Mucosa of descending colon (tissue), 3 donors: ENCODE measurements at regions of chr19 and their contacts with region 1.

Region 1: GRCh38 chr19:56085571-56086275 is 35.4 kb downstream of the ZNF787 start:
- DNase-seq: no peak
- ATAC-seq: no peak
- H3K4me3 ChIP-seq: no peak overlapping the region
- H3K4me1 ChIP-seq: peaks cover 7% of the 10 kb centered on the region
- CTCF ChIP-seq: no peak

Region 2: GRCh38 chr19:56162258-56162657 is 76.5 kb after region 1 on chr19:
- intact Hi-C with region 1: loop called in 1 of 2 experiments (anchors 5 kb)
- DNase-seq: no peak
- ATAC-seq: no peak
- H3K4me3 ChIP-seq: no peak overlapping the region
- H3K4me1 ChIP-seq: no peaks in the 10 kb centered on the region
- CTCF ChIP-seq: no peak